ENCODE measurements at regions of chr17 and their contacts with region 1.

Region 1: GRCh38 chr17:78501241-78502036 is 75.8 kb downstream of the DNAH17 start:
- DNase-seq: no peak
- H3K4me3 ChIP-seq: no peak overlapping the region
- H3K27ac ChIP-seq: no peak overlapping the region
- H3K4me1 ChIP-seq: peaks cover 0 to 20% (median 0%) of the 10 kb centered on the region in 3 donors
- H3K27me3 ChIP-seq: peaks cover 0 to 8% (median 0%) of the 10 kb centered on the region in 4 donors
- CTCF ChIP-seq: no peak
- POLR2A ChIP-seq: no peak

Region 2: GRCh38 chr17:78448356-78448993 is 53.0 kb before region 1 on chr17:
- intact Hi-C with region 1: no loop called
- DNase-seq: no peak
- H3K4me3 ChIP-seq: no peak overlapping the region
- H3K27ac ChIP-seq: no peak overlapping the region
- H3K4me1 ChIP-seq: no peaks in the 10 kb centered on the region
- H3K27me3 ChIP-seq: peaks cover 0 to 15% (median 0%) of the 10 kb centered on the region in 4 donors
- CTCF ChIP-seq: no peak
- POLR2A ChIP-seq: no peak

Region 3: DNA sequence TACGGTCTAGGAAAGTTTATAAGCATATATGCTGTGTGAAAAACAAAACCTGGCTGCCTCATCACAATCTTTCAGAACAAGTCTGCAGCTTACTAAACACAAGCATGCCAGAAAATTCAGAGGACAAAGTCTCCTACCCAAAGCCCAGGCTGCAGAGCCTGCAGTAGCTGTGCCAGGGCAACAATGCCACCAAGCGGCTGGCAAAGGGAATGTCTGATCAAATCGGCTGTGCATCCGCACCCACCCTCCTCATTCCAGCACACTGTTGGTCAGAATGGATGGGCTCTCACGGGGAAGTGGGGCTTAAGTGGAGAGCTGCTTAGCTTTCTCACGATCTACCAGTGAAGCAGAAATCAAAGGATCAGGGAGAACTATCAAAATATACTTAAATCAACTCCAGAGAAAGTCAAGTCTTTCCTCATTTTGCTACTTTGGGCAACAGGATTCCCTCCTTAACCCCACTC is 207.1 kb after region 1 on chr17:
- intact Hi-C with region 1: loop called (anchors 10 kb)
- DNase-seq: no peak
- H3K4me3 ChIP-seq: no peak overlapping the region
- H3K27ac ChIP-seq: peak overlapping the region in 2 of 4 donors; percentile 54 to 70
- H3K4me1 ChIP-seq: peaks cover 4 to 70% (median 8%) of the 10 kb centered on the region in 3 donors
- H3K27me3 ChIP-seq: no peaks in the 10 kb centered on the region
- CTCF ChIP-seq: peak; percentile 49 to 87 (median 78)
- POLR2A ChIP-seq: no peak

Measured in esophagus squamous epithelium (tissue), 5 donors.